Vagina (tissue), 2 donors: ENCODE measurements at regions of chr14 and their contacts with region 1.

Region 1: GRCh38 chr14:93086441-93087055 is 29.2 kb downstream of the ITPK1 start:
- DNase-seq: no peak
- H3K4me3 ChIP-seq: no peak overlapping the region
- H3K27ac ChIP-seq: peak overlapping the region; percentile 33
- H3K4me1 ChIP-seq: peaks cover 75% of the 10 kb centered on the region
- H3K27me3 ChIP-seq: no peaks in the 10 kb centered on the region
- CTCF ChIP-seq: no peak
- POLR2A ChIP-seq: no peak

Region 2: GRCh38 chr14:92973261-92973797 is 113.2 kb before region 1 on chr14:
- intact Hi-C with region 1: loop called (anchors 10 kb)
- DNase-seq: peak in 1 of 2 donors; percentile 96
- H3K4me3 ChIP-seq: peak overlapping the region in 1 of 2 donors; percentile 2
- H3K27ac ChIP-seq: peak overlapping the region; percentile 80
- H3K4me1 ChIP-seq: peaks cover 34% of the 10 kb centered on the region
- H3K27me3 ChIP-seq: no peaks in the 10 kb centered on the region
- CTCF ChIP-seq: peak; percentile 46 to 94 (median 50)
- POLR2A ChIP-seq: no peak

Region 3: DNA sequence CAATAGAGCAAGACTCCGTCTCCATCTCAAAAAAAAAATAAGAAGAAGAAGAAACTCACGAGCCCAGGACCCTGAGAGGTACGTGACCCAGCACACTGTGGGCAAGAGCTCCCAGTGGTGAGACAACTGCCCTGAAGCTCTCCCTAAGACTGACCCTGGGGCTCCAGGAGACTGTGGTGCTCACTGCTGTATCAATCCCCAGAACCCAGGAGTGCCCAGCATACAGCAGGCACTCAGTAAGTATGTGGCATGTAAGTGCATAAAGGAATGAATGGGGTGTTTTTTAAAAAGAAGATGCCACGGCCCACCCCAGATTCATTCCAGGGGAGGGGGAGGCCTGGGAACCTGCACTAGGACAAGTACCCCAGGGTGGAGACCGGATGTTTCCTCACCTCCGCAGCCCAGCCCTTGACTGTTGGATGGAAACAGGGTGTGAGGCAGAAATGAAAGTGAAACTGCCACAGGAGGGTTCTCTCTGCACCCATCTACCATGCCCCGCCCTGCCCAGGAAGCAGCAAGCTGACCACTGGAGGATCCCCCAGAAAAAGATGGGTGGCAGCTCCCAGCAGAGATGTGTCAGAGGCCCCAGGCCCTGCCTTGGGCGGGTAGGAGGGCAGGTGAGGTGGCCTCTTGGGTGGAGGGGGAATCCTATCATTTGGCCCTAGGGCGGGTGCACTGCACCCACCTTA is 17.0 kb after region 1 on chr14:
- intact Hi-C with region 1: no loop called
- DNase-seq: no peak
- H3K4me3 ChIP-seq: peak overlapping the region; percentile 4 to 6
- H3K27ac ChIP-seq: no peak overlapping the region
- H3K4me1 ChIP-seq: peaks cover 68% of the 10 kb centered on the region
- H3K27me3 ChIP-seq: no peaks in the 10 kb centered on the region
- CTCF ChIP-seq: no peak
- POLR2A ChIP-seq: no peak